Activated B cell treated with CpG ODN at 0.5 μM for 24 hours (primary cell): ENCODE measurements at regions of chr6 and their contacts with region 1.

Region 1: DNA sequence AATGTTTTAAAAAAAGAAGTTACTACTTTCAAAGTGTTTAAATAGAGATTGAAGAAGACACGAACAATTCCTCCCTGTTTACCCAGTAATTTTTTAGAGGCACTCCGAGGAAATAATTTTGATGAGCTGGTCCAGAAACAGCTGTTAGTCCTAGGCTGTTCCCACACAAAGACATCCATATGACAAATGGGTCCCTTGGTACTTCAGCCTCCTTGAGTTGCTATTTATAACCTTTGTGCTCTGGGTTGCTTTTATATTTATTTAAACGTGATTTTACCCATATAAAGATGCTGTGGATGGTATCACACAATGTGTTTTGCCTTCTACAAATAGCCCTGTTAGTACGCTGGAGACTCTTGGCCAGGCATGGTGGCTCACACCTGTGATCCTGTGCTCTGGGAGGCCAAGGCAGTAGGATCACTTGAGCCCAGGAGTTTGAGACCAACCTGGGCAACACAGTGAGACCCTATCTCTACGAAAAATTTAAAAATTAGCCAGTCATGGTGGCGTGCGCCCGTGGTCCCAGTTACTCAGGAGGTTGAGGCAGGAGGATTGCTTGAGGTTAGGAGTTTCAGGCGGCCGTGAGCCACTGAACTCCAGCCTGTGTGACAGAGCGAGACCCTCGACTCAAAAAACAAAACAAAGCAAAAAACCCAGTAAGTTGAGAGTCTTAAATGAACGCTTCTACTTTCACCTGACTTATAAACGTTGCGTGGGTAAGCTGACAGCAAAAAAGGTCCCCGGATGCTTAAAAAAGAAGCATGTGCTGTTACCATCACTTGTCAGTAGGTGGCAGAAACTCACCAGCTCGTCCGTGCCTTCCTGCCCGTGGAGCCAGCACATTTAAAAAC is 56.9 kb upstream of the ARMH2 start:
- DNase-seq: no peak
- ATAC-seq: peak; percentile 66
- H3K4me3 Mint-ChIP-seq: no peak overlapping the region
- H3K27ac Mint-ChIP-seq: peak overlapping the region; percentile 81
- H3K4me1 Mint-ChIP-seq: peaks cover 63% of the 10 kb centered on the region
- H3K27me3 Mint-ChIP-seq: no peaks in the 10 kb centered on the region
- CTCF ChIP-seq: peak; percentile 58

Region 2: GRCh38 chr6:24883618-24884017 is 28.0 kb after region 1 on chr6:
- CTCF ChIA-PET with region 1: interaction called, 5 read pairs
- POLR2A ChIA-PET with region 1: interaction called, 3 read pairs
- intact Hi-C with region 1: loop called (anchors 2 kb)
- DNase-seq: no peak
- ATAC-seq: peak; percentile 55
- H3K4me3 Mint-ChIP-seq: no peak overlapping the region
- H3K27ac Mint-ChIP-seq: peak overlapping the region; percentile 80
- H3K4me1 Mint-ChIP-seq: peaks cover 89% of the 10 kb centered on the region
- H3K27me3 Mint-ChIP-seq: no peaks in the 10 kb centered on the region
- CTCF ChIP-seq: no peak

Region 3: GRCh38 chr6:25017932-25018567 is 162.4 kb after region 1 on chr6:
- CTCF ChIA-PET with region 1: interaction called, 98 read pairs
- POLR2A ChIA-PET with region 1: interaction called, 4 read pairs
- intact Hi-C with region 1: loop called (anchors 1 kb)
- DNase-seq: no peak
- ATAC-seq: peak; percentile 68
- H3K4me3 Mint-ChIP-seq: peak overlapping the region; percentile 32
- H3K27ac Mint-ChIP-seq: peak overlapping the region; percentile 70
- H3K4me1 Mint-ChIP-seq: peaks cover 56% of the 10 kb centered on the region
- H3K27me3 Mint-ChIP-seq: no peaks in the 10 kb centered on the region
- CTCF ChIP-seq: no peak

Region 4: DNA sequence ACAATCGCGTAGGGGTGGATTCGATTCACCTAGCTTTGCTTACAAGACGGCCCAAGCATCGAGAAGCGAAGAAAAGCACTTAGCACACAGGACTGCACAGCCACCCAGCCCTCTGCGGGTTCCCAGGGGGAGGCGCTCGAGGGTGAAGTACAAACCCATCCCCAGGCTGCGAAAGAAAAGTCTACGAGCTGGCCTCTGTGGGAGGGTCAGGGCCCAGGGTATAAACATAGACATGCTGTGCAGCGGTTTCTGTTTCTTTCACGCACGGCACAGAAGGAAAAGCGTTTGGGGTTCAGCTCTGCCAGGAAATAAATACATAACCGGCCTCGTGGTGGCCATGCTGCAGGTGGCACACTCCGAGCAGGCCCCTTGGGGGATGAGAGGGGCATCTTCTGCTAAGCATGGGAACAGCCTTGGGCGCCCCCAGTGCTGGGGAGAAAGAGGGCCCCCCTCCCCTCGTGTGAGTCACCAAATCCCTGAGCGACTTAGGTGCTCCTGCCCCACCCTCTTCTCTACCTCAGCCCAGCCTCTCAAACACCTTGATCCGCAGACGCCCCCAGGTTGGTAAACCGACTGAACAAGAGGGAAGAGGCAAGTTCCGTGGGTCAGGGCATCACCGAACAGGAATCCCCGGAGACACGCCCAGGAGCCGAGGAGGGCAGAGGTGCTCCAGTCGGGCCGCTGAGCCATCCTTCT is 171.7 kb after region 1 on chr6:
- CTCF ChIA-PET with region 1: interaction called, 50 read pairs
- POLR2A ChIA-PET with region 1: interaction called, 5 read pairs
- intact Hi-C with region 1: loop called (anchors 2 kb)
- DNase-seq: peak; percentile 59
- ATAC-seq: peak; percentile 90
- H3K4me3 Mint-ChIP-seq: peak overlapping the region; percentile 77
- H3K27ac Mint-ChIP-seq: peak overlapping the region; percentile 83
- H3K4me1 Mint-ChIP-seq: peaks cover 58% of the 10 kb centered on the region
- H3K27me3 Mint-ChIP-seq: no peaks in the 10 kb centered on the region
- CTCF ChIP-seq: no peak

Region 5: GRCh38 chr6:25107218-25107617 is 251.6 kb after region 1 on chr6:
- CTCF ChIA-PET with region 1: no interaction called
- POLR2A ChIA-PET with region 1: no interaction called
- intact Hi-C with region 1: no loop called
- DNase-seq: no peak
- ATAC-seq: no peak
- H3K4me3 Mint-ChIP-seq: no peak overlapping the region
- H3K27ac Mint-ChIP-seq: no peak overlapping the region
- H3K4me1 Mint-ChIP-seq: peaks cover 17% of the 10 kb centered on the region
- H3K27me3 Mint-ChIP-seq: no peaks in the 10 kb centered on the region
- CTCF ChIP-seq: no peak

Region 6: DNA sequence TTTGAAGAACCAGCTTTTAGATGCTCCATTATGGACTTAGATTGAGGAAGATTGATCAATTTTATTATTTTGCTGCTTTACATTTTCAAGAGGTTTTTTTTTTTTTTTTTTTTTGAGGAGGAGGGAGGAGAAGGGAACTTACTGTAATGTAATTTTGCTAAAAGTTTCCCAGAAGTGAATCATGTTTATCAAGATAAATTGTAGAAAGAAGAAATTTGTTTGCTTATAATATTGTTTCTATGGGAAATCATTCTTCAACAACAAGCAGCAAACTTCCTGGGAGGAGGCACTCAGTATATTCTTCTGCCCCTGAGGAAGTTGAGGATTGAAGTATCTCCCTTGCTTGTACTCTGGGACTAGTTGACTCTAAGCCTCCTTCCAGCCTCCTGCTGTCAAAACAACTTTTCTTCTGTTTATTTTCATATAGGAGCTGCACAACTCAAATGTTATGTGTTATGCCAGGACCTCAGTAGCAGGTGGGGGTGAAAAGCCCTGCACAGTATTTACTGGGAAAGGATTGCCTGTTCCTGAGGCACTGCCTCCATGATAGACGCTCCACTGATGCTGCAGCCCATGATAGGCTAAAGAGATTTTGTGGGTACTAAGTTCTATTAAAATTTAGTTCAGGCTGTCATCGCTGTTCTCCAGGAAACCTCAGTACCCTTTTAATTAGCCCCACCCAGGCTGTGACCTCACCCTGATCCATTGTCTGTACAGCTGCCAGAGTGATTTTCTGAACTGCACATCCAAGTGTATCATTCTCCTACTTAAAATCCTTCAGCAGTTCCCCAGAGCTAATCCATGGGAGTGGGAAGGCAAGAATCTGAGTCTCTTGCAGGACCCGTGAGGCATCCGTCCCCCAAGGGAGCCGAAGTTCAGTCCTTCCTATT is 475.4 kb after region 1 on chr6:
- CTCF ChIA-PET with region 1: no interaction called
- POLR2A ChIA-PET with region 1: no interaction called
- intact Hi-C with region 1: no loop called
- DNase-seq: no peak
- ATAC-seq: no peak
- H3K4me3 Mint-ChIP-seq: no peak overlapping the region
- H3K27ac Mint-ChIP-seq: no peak overlapping the region
- H3K4me1 Mint-ChIP-seq: peaks cover 42% of the 10 kb centered on the region
- H3K27me3 Mint-ChIP-seq: no peaks in the 10 kb centered on the region
- CTCF ChIP-seq: no peak